GM18951 (cell line): ENCODE measurements at regions of chr5 and their contacts with region 1.

Region 1: DNA sequence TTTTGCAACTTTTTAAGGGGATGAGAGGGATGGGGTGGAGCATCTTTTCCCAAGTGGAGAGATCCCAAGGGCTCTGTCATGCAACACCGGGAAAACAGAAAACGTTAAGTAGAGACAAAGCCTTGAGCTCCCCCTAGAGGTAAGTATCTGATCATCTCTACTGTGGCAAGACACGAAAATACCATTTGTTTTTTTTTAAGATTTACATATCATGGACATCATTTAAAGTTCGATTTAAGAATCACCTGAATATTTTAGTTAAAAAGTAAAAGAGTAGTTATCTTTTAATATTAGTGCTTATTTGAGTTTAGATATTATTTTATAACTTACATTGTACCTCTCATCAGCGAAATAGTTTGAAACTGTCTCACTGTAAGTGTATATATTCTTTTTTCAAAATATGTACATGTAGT is 200.4 kb downstream of the LRRC70 start:
- POLR2A ChIP-seq: no peak

Region 2: DNA sequence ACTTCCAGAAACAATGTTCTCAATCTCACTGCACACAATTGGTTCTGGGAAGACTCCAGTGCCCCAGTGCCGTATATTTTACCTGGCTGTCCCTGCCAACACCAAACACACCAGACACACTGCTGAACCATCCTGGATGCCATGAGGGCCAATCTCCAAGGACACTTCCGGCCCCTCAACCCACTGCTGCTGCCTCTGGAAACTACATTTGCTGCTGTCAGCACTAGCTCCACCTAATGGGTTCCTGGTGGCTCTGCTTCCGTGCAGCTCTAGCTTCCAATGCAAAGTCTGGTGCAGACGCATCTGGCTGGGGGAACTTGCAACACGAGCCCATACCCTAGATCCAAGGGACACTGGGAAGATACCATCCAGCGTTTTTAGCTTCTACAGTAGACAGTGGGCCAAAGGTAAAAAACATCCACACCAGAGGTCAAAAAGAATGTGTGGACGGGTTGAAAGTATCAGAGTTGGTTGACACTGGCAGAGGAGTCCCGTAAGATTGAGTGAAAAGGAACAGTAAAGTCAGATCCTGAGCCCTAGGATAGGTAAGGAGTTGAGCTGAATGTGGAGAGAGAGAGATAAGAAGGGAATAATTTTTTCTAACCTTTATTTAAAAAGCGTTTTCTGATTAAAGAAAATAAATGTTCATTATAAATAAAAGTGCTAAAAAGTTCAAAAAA is 572.7 kb before region 1 on chr5:
- in situ Hi-C with region 1: loop called (anchors 25 kb)
- POLR2A ChIP-seq: no peak

Region 3: DNA sequence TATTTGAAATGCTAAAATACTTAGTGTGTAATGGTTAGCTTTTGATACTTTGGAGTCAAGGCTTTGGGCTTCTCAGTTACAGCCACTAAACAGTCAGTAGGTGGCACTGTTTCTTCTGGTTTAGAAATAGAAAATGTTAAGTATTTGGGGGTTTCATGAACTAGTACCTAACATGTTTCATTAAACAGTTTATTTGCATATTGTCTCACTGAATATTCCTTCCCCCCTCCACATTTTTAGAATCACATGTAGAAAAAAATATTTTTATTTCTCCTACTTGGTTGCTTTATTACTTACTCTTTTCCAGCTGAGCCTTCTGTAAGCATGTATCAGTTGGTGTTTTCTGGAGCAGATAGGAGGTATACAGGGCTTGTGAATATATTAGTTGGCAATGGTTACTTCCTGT is 318.4 kb before region 1 on chr5:
- in situ Hi-C with region 1: loop called (anchors 25 kb)
- POLR2A ChIP-seq: no peak

Region 4: DNA sequence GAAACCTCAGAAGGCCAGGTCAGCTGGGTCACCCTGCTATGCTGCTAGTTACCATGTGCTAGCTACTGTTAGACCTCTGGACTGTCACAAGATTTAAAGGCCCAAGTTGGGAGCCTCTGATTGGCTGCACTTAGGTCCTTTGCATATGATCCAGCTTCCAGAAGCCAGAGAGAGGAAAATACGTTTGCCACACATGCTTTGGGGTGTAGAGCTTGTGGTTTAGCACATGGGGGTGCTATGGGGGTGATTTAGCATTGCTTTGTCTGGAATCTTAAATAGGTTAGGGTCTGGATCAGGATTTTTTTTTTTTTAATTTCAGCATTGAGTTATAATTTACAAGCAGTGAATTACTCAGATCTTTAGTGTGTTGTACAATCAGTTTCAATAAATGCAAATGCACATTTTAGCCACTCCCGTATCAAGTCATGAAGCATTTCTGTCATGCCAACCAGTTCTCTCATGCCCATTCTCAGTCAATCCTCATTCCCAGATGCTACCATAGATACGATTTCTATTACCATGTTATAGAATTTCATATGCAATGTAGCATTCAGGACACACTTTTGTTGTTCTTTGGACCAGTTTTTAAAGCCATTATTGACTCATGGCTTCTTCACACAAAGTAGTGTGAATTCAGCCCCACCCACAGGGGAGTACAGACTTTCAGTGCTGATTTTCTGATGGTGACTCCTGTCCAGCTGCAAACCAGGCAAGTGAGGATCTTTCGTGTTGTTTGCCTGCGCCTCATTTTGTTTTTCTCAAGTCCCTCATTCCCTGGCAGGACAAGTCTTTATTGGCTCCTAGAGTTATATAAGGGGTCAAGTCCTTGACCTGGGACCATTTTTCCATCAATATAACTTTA is 50.0 kb after region 1 on chr5:
- in situ Hi-C with region 1: no loop called
- POLR2A ChIP-seq: no peak